PC-9 (cell line): ENCODE measurements at regions of chr16 and their contacts with region 1.

Region 1: DNA sequence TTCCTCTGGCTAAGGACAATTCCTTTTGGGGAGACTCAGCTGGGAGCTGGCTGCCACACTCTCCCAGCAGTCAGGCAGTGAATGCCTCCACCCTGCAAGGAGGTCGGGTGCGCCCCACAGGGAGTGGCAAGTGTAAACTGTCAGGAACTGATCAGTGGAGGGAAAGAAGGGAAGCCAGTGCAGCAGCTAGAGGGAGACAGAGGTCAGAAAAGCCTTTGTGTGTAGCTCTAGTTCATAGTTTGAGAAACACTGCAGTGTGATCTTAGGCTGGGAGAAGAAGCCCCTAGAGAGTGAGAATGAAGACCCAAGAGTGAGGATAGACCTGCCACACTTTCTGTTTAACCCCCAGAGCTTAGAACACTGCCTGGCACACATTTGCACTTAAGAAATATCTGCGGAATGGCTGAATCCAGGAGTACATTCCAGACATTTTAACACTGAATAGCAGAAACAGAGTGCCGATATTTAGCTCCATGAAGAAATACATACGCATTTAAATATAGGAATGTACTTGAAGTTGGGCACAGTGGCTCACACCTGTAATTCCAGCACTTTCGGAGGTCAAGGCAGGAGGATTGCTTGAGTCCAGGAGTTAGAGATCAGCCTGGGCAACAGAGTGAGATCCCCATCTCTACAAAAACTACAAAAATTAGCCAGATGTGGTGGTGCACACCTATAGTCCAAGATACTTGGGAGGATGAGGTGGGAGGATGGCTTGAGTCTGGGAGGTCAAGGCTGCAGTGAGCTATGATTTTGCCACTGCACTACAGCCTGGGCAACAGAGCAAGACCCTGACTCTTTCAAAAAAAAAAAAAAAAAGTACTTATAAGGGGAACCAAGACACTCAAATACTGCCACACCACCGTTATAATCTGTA is 11.1 kb upstream of the SLC5A11 start:
- DNase-seq: peak in 1 of 2 experiments; percentile 56
- H3K4me3 ChIP-seq: no peak overlapping the region
- H3K27ac ChIP-seq: no peak overlapping the region
- H3K4me1 ChIP-seq: peaks cover 13% of the 10 kb centered on the region
- H3K27me3 ChIP-seq: no peaks in the 10 kb centered on the region
- CTCF ChIP-seq: peak; percentile 52

Region 2: DNA sequence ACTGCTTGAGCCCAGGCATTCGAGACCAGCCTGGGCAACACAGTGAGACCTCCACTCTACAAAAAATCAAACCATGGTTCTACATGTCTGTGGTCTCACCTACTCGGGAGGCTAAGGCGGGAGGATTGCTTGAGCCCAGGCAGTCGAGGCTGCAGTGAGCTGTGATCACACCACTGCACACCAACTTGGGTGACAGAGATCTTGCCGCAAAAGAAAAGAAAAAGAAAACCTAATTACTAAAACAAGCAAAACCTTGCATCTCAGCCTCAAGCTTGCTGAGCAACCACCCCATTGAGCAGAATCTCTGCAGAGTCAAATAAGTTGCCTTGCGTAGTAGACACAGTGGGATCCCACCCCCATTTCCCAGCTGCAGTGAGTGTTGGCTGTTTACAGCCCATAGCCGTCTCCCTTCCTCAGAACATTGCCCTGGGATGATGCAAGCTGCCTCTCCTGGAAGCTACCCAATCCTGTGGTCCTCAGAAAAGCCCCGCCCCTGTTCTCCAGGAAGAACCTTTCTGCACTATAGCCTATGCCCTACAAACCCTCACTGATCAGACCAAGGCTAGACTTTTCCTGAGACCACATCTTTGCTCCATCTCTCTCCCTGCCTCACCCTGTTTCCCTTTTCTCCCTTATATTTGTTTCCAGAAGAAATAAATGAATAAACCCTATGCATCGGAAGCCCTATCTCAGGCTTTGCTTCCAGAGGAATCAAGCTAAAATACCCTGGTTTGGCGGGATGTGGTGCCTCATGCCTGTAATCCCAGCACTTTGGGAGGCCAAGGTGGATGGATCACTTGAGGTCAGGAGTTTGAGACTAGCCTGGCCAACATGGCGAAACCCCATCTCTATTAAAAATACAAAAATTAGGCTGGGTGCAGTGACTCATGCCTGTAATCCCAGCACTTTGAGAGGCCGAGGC is 1104.9 kb before region 1 on chr16:
- CTCF ChIA-PET with region 1: no interaction called
- POLR2A ChIA-PET with region 1: interaction called, 18 read pairs
- intact Hi-C with region 1: no loop called
- DNase-seq: peak; percentile 37 to 55
- H3K4me3 ChIP-seq: no peak overlapping the region
- H3K27ac ChIP-seq: no peak overlapping the region
- H3K4me1 ChIP-seq: peaks cover 8% of the 10 kb centered on the region; the same call in 1 of the 2 replicates
- H3K27me3 ChIP-seq: no peaks in the 10 kb centered on the region
- CTCF ChIP-seq: no peak

Region 3: DNA sequence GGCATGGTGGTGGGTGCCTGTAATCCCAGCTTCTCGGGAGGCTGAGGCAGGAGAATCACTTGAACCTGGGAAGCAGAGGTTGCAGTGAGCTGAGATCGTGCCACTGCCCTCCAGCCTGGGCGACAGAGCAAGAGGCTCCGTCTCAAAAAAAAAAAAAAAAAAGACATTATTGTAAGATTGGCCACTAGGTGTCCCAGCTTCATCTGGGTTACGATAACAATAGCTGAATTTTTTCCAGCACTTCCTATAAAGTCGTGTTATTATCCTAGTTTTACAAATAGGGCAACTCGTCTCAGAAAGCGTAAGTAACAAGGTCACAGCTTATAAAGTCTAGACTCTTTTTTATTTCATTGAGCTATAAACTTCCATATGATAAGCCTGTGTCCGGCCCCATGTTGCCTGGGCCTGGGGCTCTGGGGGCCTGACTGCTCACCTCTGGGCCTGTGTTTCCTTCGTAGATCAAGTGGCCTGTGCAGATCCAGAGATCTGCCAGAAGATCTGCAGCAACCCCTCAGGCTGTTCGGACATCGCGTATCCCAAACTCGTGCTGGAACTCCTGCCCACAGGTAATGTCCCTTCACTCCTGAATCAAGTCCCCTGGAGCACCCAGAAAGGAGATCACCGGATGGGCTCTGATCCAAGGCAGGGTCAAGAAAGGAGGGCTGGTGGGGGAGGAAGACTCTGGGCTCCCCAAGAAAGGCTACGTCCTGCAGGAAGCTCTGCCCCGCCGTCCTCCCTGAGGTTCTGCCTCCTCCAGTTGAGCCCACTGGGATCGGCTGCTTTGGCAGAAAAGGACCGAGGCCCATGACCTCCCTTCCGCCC is 71.7 kb after region 1 on chr16:
- CTCF ChIA-PET with region 1: no interaction called
- POLR2A ChIA-PET with region 1: no interaction called
- intact Hi-C with region 1: loop called (anchors 10 kb)
- DNase-seq: peak in 1 of 2 experiments; percentile 6
- H3K4me3 ChIP-seq: no peak overlapping the region
- H3K27ac ChIP-seq: no peak overlapping the region
- H3K4me1 ChIP-seq: no peaks in the 10 kb centered on the region
- H3K27me3 ChIP-seq: no peaks in the 10 kb centered on the region
- CTCF ChIP-seq: peak; percentile 69

Region 4: GRCh38 chr16:25051406-25052150 is 216.9 kb after region 1 on chr16:
- CTCF ChIA-PET with region 1: no interaction called
- POLR2A ChIA-PET with region 1: no interaction called
- intact Hi-C with region 1: loop called (anchors 2 kb)
- DNase-seq: peak; percentile 23 to 69
- H3K4me3 ChIP-seq: no peak overlapping the region
- H3K27ac ChIP-seq: no peak overlapping the region
- H3K4me1 ChIP-seq: peaks cover 38% of the 10 kb centered on the region
- H3K27me3 ChIP-seq: no peaks in the 10 kb centered on the region
- CTCF ChIP-seq: no peak

Region 5: DNA sequence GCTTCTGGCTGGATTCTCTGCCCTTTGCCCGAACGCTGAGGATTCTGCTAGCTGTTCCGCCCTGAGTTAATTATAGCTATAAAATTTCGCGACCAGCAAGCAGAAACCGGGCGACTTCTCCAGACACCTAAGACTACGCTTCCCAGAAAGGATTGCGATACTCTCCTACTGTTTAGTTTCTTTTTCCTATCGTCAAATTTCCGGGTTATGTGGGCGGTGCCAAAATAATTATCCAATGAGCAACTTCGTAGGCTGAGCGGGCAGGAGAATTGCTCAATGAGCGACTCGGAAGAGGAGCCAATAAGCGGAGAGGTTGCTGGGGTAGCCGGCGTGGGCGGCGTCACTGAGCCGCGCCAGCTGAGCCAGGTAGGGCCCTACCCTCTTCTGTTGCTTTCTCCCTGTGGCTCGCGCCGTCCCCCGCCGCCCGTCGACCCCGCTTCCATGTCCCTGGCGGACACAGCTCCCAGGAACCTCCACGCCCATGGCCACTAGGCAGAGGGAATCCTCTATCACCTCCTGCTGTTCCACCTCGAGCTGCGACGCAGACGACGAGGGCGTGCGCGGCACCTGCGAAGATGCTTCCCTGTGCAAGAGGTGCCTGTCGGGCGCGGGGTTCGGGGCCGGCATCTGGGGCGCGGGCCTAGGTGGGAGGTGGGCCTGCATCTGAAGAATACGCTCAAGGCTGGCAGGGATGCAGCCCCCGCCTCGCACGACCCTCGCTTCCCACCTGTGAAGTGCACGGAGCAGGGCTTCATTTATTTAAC is 276.9 kb after region 1 on chr16 and contains the start of gene LCMT1:
- CTCF ChIA-PET with region 1: interaction called, 12 read pairs
- POLR2A ChIA-PET with region 1: no interaction called
- intact Hi-C with region 1: no loop called
- DNase-seq: peak; percentile 92 to 96
- H3K4me3 ChIP-seq: peak within 1 kb of the TSS; percentile 74
- H3K27ac ChIP-seq: peak within 1 kb of the TSS; percentile 82
- H3K4me1 ChIP-seq: peaks cover 29% of the 10 kb centered on the region
- H3K27me3 ChIP-seq: no peaks in the 10 kb centered on the region
- CTCF ChIP-seq: no peak
- total RNA-seq, gene LCMT1: 67.1 and 113 TPM in 2 replicates

Region 6: DNA sequence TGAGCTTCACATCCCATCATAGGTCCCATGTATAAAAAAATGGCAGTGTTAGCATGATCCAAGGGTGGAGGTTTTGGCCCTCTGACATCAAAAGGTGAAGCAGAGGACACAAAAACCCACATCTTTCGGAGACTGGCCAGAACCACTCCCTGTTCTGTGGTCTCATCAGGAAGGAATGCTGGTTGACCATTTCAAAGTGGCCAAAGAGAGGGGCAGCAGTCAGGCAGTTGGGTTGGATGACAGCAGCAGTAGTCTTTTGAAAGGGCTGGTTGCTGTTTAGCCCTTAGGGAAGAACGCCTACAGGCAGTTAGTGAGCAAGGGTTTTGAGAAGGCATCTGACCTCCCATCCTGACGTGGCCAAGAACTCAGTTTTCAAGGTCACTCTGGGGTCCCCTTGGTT is 317.3 kb after region 1 on chr16:
- CTCF ChIA-PET with region 1: no interaction called
- POLR2A ChIA-PET with region 1: no interaction called
- intact Hi-C with region 1: loop called (anchors 1 kb)
- DNase-seq: peak; percentile 86 to 87
- H3K4me3 ChIP-seq: no peak overlapping the region
- H3K27ac ChIP-seq: peak overlapping the region; percentile 80
- H3K4me1 ChIP-seq: peaks cover 29% of the 10 kb centered on the region
- H3K27me3 ChIP-seq: no peaks in the 10 kb centered on the region
- CTCF ChIP-seq: no peak

Region 7: DNA sequence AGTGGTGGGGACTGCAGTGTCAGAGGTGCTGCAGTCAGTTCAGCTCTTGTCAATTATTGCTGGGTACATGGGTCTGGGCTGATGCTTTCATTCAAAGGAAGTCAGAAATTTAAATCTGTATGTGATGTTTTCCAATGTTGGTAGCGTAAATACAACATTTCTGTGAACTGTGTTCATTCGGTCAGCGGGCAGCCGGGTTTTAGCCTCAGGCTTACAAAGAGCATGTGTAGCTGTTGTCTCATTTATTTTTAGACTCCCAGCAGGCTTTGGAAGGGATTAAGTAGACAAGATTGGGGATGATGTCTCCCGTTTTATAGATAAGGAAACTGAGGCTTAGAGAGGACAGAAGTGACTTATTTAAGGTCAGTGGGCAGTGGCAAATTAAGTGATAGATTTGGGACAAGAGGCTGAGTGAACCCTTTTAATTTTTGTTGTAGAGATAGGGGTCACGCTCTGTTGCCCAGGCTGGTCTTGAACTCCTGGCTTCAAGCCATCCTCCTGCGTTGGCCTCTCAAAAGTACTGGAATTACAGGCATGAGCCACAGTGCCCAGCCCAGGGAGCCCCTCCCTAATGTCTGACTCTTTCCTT is 390.1 kb after region 1 on chr16:
- CTCF ChIA-PET with region 1: no interaction called
- POLR2A ChIA-PET with region 1: no interaction called
- intact Hi-C with region 1: loop called (anchors 10 kb)
- DNase-seq: no peak
- H3K4me3 ChIP-seq: no peak overlapping the region
- H3K27ac ChIP-seq: no peak overlapping the region
- H3K4me1 ChIP-seq: no peaks in the 10 kb centered on the region
- H3K27me3 ChIP-seq: no peaks in the 10 kb centered on the region
- CTCF ChIP-seq: no peak